ENCODE measurements at regions of chr6 and their contacts with region 1.

Region 1: DNA sequence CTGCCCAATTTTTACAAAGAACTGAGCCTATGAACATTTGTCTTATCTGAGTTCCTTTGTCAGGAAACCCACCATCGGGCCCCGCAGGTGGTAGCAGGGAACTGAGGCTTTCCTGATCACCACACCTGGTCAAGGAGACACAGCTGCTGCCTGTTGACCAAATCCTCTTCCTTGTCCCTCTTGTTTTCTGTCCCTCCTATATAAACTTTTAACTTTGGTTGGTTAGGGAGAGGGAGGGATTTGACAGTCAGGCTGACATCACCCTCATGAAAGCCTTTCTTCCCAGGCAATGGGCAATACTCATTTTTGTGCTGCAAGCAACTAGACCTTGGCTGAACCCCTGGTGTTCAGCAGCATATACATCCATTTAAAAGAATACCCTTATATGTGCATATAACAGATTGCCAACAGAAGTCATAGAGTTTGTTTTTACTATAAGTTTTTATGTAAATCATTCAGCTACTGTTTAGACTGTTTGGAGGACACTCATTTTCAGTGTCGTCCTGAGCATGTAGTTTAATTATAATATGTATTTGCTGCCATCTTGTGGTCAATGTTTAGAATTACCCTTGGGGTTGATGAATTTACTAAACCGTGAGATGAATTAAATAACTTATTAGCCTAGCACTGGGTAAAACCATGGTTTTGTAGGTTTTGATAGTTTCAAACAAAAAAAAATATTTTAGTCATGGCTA is 17.0 kb downstream of the CRISP1 start:
- DNase-seq: peak; percentile 64
- ATAC-seq: peak; percentile 93
- H3K4me3 ChIP-seq: no peak overlapping the region
- H3K27ac ChIP-seq: no peak overlapping the region
- H3K4me1 ChIP-seq: no peaks in the 10 kb centered on the region
- H3K27me3 ChIP-seq: no peaks in the 10 kb centered on the region
- CTCF ChIP-seq: peak; percentile 77
- EP300 ChIP-seq: no peak
- POLR2A ChIP-seq: no peak
- RAD21 ChIP-seq: peak; percentile 54

Region 2: DNA sequence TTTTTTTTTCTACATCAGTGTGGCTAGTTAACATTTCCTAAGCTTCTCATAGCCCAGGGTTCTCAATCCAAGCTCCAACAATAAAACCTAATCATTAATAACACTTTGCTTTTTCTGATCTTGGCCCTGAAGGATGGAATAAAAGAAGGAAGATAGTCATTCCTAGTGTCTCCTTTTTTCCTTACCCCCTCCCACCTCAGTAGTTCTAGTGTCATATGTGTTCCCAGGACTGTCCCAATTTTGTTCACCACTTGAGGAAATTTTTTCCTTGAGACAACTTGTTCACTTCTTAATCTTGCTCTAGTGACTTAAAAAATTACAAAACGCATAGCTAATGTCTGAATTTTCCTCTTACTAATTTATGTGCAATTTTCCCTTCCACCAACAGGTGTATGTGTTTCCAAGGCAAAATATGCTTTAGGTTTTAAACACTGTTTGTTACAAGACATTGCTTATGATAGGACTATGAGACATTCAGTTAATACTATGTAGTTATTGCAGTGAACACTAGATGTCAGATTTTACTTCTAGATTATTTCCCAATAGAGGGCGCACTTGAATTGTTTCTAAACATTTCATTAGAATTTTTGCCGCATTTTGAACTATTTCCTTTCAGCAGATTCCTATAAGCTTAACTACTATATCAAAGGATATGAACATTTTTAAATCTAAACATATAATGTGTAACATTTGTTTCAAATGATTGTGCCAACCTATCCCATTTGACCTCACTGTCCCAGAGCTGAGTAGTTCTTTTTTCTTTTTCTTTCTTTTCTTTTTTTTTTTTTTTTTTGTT is 317.4 kb before region 1 on chr6:
- CTCF ChIA-PET with region 1: interaction called, 26 read pairs
- POLR2A ChIA-PET with region 1: no interaction called
- in situ Hi-C with region 1: no loop called
- intact Hi-C with region 1: loop called (anchors 1 kb)
- DNase-seq: peak; percentile 72
- ATAC-seq: peak; percentile 98
- H3K4me3 ChIP-seq: peak overlapping the region; percentile 24 to 41 (median 40)
- H3K27ac ChIP-seq: no peak overlapping the region
- H3K4me1 ChIP-seq: peaks cover 16% of the 10 kb centered on the region
- H3K27me3 ChIP-seq: no peaks in the 10 kb centered on the region
- CTCF ChIP-seq: peak; percentile 83
- EP300 ChIP-seq: peak in 1 of 2 experiments; percentile 3; a peak in 1 of 4 replicates
- POLR2A ChIP-seq: no peak
- RAD21 ChIP-seq: peak; percentile 85

Region 3: GRCh38 chr6:49606696-49607390 is 242.5 kb before region 1 on chr6:
- CTCF ChIA-PET with region 1: no interaction called
- POLR2A ChIA-PET with region 1: no interaction called
- in situ Hi-C with region 1: no loop called
- intact Hi-C with region 1: loop called (anchors 5 kb)
- DNase-seq: peak; percentile 91
- ATAC-seq: peak; percentile 88
- H3K4me3 ChIP-seq: no peak overlapping the region
- H3K27ac ChIP-seq: no peak overlapping the region
- H3K4me1 ChIP-seq: 0 out of 2 replicates have a peak, but pooled peaks cover 5% of the 10 kb centered on the region
- H3K27me3 ChIP-seq: 0 out of 5 replicates have a peak, but pooled peaks cover 0 to 5% of the 10 kb centered on the region in 2 experiments
- CTCF ChIP-seq: peak; percentile 94
- EP300 ChIP-seq: no peak
- POLR2A ChIP-seq: no peak
- RAD21 ChIP-seq: peak; percentile 71; the same call in 1 of the 2 replicates

Region 4: GRCh38 chr6:49625140-49625539 is 224.2 kb before region 1 on chr6:
- CTCF ChIA-PET with region 1: interaction called, 55 read pairs
- POLR2A ChIA-PET with region 1: no interaction called
- in situ Hi-C with region 1: loop called (anchors 5 kb)
- intact Hi-C with region 1: loop called (anchors 1 kb)
- DNase-seq: no peak
- ATAC-seq: no peak
- H3K4me3 ChIP-seq: no peak overlapping the region
- H3K27ac ChIP-seq: no peak overlapping the region
- H3K4me1 ChIP-seq: no peaks in the 10 kb centered on the region
- H3K27me3 ChIP-seq: no peaks in the 10 kb centered on the region; a peak in 1 of 5 replicates
- CTCF ChIP-seq: no peak
- EP300 ChIP-seq: no peak
- POLR2A ChIP-seq: no peak
- RAD21 ChIP-seq: no peak

Region 5: GRCh38 chr6:49772285-49772684 is 77.1 kb before region 1 on chr6:
- CTCF ChIA-PET with region 1: no interaction called
- POLR2A ChIA-PET with region 1: no interaction called
- in situ Hi-C with region 1: no loop called
- intact Hi-C with region 1: loop called (anchors 10 kb)
- DNase-seq: no peak
- ATAC-seq: no peak
- H3K4me3 ChIP-seq: no peak overlapping the region
- H3K27ac ChIP-seq: no peak overlapping the region
- H3K4me1 ChIP-seq: peaks cover 9% of the 10 kb centered on the region
- H3K27me3 ChIP-seq: no peaks in the 10 kb centered on the region
- CTCF ChIP-seq: no peak
- EP300 ChIP-seq: no peak
- POLR2A ChIP-seq: no peak
- RAD21 ChIP-seq: no peak

Region 6: GRCh38 chr6:49806145-49806544 is 43.2 kb before region 1 on chr6:
- CTCF ChIA-PET with region 1: no interaction called
- POLR2A ChIA-PET with region 1: no interaction called
- in situ Hi-C with region 1: no loop called
- intact Hi-C with region 1: no loop called
- DNase-seq: no peak
- ATAC-seq: no peak
- H3K4me3 ChIP-seq: no peak overlapping the region
- H3K27ac ChIP-seq: no peak overlapping the region
- H3K4me1 ChIP-seq: no peaks in the 10 kb centered on the region
- H3K27me3 ChIP-seq: no peaks in the 10 kb centered on the region
- CTCF ChIP-seq: no peak
- EP300 ChIP-seq: no peak
- POLR2A ChIP-seq: no peak
- RAD21 ChIP-seq: no peak